HEK293T (cell line): ENCODE measurements at regions of chr2 and their contacts with region 1.

Region 1: DNA sequence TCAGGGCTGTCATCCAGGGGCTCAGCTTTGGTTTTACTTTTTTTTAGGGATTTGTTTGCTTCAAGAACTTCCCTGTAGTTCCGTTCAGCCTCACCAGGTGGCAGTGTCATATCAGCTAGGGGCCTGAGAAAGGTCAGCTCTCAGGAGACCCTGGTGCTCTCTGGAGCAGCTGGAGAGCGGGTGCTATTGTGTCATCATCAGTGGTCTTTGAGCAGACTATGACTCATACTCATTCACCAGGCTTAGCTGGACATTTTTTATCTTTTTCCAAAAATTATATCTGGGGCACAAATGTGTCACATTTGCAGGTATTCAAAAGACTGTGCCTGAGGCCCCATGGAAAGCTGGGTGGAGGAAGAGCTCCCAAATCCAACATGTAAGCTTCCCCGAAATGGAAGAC is 24.4 kb downstream of the ZNF892 start:
- DNase-seq: peak; percentile 65

Region 2: GRCh38 chr2:95313355-95314131 is 81.8 kb after region 1 on chr2:
- CTCF ChIA-PET with region 1: interaction called, 13 read pairs
- POLR2A ChIA-PET with region 1: no interaction called
- DNase-seq: no peak

Region 3: GRCh38 chr2:95379371-95379831 is 147.7 kb after region 1 on chr2:
- CTCF ChIA-PET with region 1: no interaction called
- POLR2A ChIA-PET with region 1: no interaction called
- DNase-seq: no peak